ENCODE measurements at regions of chr9 and their contacts with region 1.

Region 1: DNA sequence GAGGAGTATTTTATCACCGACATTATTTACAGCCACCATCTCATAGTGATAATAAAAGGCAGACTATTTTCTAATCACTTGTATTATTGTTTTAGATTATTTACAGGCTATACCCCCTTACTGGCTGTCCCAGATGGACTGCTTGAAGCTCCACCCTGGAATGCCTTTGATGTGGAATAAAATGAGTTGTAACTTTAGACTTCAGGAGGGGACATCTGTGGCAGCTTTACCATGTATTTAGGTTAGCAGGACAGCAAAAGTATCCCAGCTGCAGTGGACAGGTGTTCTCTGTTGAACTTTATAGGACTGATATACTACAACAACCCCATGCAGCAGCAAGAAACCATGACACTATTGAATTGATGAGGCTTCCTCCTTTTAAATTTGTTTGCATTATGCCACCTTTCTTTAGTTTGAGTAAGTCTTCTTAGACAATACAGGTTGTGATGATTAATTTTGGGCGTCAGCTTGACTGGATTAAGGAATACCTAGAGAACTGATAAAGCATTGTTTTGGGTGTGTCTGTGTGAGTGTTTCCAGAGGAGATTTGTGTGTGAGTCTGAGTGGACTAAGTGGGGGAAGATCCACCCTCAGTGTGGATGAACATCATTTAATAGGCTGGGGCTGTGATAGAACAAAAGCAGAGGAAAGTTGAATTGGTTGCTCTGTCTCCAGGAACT is 29.2 kb upstream of the C9orf57 start:
- DNase-seq: no peak

Region 2: DNA sequence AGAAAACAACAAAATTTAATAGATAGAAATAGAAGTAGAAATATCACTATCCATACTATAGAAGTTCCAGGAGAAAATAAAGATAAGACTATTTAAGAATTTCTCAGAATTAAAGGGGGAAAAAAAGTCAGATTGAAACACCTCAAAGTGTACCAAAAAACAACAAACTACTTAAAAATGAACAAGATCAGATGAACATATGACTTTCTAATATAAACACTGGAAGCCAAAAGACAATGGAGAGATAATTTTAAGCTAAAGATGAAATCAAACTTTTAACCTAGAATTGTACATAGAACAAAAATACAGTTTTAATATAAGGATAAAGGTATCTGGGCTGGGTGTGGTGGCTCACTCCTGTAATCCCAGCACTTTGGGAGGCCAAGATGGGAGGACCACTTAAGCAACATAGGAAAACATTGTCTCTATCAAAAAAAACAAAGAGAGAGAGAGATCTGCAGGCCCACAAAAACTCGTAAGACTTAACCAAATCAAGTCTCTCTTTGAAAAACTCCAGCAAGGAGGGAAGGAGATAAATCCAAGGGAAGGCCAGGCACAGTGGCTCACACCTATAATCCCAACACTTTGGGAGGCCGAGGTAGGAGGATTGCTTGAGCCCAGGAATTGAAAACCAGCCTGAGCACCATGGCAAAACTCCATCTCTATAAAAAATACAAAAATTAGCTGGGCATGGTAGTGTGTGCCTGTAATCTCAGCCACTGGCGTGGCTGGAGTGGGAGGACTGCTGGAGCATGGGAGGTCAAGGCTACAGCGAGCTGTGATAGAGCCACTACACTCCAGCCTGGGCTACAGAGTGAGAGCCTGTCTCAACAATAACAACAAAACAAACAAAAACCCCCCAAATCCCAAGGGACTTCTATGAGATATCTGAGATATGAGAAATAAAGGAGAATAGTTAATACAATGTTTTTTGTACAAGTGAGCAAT is 211.0 kb before region 1 on chr9:
- intact Hi-C with region 1: no loop called
- DNase-seq: no peak

Region 3: DNA sequence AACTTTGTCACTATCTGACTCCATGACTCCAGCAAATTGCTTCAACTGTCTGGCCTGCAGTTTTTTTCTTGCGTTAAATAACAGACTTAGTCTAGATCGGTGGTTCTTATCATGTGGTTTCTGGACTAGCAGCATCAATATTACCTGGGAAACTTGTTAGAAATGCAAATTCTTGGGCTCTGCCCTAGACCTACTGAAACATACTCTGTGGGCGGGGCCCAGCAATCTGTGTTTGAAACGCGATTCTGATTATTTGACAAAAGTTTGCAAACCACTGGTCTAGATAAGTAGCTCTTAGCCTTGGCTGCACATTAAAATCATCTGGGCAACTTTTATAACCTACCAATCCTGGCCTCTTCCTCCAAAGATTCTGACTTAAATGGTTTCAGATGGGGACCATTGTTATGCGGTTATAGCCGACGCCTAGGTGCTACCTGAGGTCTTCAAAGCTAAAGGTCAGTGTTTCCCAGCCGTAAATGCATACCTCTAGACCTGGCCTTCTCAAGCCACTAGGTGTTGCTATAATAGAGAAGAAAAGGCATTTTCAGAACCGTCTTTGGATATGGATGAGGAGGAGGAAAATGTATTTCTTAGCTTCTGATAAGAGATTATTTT is 104.2 kb before region 1 on chr9:
- intact Hi-C with region 1: no loop called
- DNase-seq: no peak

Region 4: GRCh38 chr9:72041775-72042194 is 47.8 kb before region 1 on chr9:
- intact Hi-C with region 1: no loop called
- DNase-seq: peak; percentile 88

Region 5: DNA sequence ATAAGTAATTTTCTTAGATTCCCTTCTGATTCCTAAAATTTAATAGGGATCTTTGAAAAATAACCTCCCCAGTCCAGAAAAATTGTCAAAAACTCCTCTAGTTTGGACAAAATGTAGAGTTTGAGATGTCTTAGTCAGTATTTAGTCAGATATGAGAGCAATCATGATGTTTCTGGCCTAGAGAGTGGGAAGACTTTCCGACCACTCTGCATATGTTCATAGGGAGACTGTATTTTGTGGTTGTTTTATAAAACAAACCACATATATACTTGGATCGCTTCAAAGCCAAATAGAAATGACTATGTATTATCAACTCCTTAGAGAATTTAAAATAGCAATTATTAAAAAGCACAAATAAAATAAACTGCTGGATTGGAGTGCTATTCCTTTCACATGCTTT is 259.6 kb after region 1 on chr9:
- intact Hi-C with region 1: loop called in 1 of 2 experiments (anchors 5 kb)
- DNase-seq: no peak

Region 6: DNA sequence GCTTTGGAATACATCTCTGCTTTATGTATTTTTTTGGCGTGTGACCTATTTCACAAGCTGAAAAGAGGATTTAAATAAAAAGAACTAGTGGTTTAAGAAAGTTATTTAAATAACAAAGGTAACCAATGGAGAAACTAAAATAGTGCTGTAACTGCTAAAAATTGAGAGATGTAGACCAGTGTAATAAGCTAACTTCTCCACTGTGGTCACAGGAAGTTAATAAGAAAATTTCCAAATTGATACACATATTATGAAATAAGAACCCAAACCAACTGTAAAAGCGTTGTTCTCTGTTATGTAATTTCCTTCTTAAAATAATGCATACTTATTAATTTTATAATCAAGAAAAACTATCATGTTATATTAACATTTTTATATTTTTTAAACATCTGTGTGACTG is 304.5 kb after region 1 on chr9:
- intact Hi-C with region 1: no loop called
- DNase-seq: no peak

Region 7: GRCh38 chr9:73753171-73753570 is 1663.6 kb after region 1 on chr9:
- intact Hi-C with region 1: loop called in 1 of 2 experiments (anchors 5 kb)
- DNase-seq: no peak

Measured in posterior vena cava (tissue), 2 donors.